Caco-2 (cell line): ENCODE measurements at regions of chr16 and their contacts with region 1.

Region 1: GRCh38 chr16:19717771-19718602 is at the starts of genes IQCK and KNOP1:
- DNase-seq: peak; percentile 88 to 89
- H3K4me3 ChIP-seq: peak within 1 kb of the TSS; percentile 97
- H3K4me3 Mint-ChIP-seq: peak within 1 kb of the TSS; percentile 91
- H3K27ac Mint-ChIP-seq: peak within 1 kb of the TSS; percentile 88
- H3K4me1 ChIP-seq: peaks cover 17% of the 10 kb centered on the region
- H3K4me1 Mint-ChIP-seq: peaks cover 18% of the 10 kb centered on the region
- H3K27me3 ChIP-seq: no peaks in the 10 kb centered on the region
- H3K27me3 Mint-ChIP-seq: no peaks in the 10 kb centered on the region
- CTCF ChIP-seq: no peak
- total RNA-seq, gene IQCK: 1.7 and 2.0 TPM in 2 replicates
- total RNA-seq, gene KNOP1: 29.3 and 31.4 TPM in 2 replicates

Region 2: DNA sequence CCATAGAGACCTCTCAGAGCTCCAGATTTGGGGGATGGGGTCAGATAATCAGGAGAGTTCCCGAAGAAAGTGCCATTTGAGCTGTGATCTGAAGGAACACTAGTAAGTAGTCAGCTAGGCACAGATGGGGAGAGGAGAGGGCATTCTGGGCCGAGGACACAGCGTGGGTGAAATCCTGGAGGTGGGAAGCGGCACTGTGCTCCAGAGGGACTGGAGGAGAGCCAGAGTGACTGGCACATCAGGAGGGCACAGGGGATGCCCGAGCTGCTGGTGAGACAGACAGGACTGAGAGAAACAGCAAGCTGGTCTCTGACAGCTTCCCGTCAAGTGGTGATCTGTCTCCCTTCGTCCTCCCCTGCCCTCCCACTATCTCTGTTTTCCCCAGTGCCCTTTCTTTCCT is 40.6 kb before region 1 on chr16:
- CTCF ChIA-PET with region 1: no interaction called
- POLR2A ChIA-PET with region 1: no interaction called
- intact Hi-C with region 1: no loop called
- DNase-seq: no peak
- H3K4me3 ChIP-seq: no peak overlapping the region
- H3K4me3 Mint-ChIP-seq: no peak overlapping the region
- H3K27ac Mint-ChIP-seq: no peak overlapping the region
- H3K4me1 ChIP-seq: no peaks in the 10 kb centered on the region
- H3K4me1 Mint-ChIP-seq: no peaks in the 10 kb centered on the region
- H3K27me3 ChIP-seq: no peaks in the 10 kb centered on the region
- H3K27me3 Mint-ChIP-seq: no peaks in the 10 kb centered on the region
- CTCF ChIP-seq: no peak

Region 3: DNA sequence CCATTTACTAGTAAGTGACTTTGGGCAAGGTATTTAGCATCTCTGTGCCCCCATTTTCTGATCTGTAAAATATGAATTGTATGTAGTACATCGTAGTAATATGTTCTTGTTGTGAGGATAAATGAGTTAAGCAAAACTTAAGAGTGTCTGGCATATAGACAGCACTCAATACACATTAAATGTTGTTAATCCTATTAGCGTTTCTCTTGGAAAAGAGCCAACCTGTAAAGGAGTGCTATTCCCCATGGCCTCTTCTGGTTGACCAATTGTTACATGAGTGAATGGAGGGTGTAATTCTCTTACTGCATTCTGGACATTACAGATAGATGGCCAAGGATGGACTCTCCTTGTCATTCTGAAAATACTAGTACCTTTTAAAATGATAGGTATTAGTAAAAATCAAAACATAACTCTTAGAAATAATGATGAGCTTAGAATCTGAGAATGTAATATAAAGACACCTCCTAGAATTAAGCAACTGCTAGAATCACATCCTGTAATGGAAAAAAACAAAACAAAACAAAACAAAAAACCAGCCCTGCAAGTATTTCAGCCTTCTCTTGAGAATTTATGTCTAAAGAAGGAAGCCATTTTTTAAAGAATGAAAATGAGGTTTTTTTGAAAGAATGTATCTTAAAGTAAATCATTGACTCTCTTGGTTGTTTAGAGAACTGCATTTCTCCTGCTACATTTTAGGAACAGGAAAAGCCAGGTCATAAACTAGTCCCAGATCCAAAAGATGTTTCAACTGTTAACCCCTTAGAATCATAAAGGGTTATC is 30.6 kb after region 1 on chr16:
- CTCF ChIA-PET with region 1: no interaction called
- POLR2A ChIA-PET with region 1: interaction called, 3 read pairs
- intact Hi-C with region 1: loop called (anchors 2 kb)
- DNase-seq: peak in 1 of 2 experiments; percentile 25
- H3K4me3 ChIP-seq: no peak overlapping the region
- H3K4me3 Mint-ChIP-seq: no peak overlapping the region
- H3K27ac Mint-ChIP-seq: peak overlapping the region; percentile 67
- H3K4me1 ChIP-seq: peaks cover 36% of the 10 kb centered on the region
- H3K4me1 Mint-ChIP-seq: peaks cover 3% of the 10 kb centered on the region
- H3K27me3 ChIP-seq: no peaks in the 10 kb centered on the region
- H3K27me3 Mint-ChIP-seq: no peaks in the 10 kb centered on the region
- CTCF ChIP-seq: no peak